ENCODE measurements at regions of chr11 and their contacts with region 1.

Region 1: DNA sequence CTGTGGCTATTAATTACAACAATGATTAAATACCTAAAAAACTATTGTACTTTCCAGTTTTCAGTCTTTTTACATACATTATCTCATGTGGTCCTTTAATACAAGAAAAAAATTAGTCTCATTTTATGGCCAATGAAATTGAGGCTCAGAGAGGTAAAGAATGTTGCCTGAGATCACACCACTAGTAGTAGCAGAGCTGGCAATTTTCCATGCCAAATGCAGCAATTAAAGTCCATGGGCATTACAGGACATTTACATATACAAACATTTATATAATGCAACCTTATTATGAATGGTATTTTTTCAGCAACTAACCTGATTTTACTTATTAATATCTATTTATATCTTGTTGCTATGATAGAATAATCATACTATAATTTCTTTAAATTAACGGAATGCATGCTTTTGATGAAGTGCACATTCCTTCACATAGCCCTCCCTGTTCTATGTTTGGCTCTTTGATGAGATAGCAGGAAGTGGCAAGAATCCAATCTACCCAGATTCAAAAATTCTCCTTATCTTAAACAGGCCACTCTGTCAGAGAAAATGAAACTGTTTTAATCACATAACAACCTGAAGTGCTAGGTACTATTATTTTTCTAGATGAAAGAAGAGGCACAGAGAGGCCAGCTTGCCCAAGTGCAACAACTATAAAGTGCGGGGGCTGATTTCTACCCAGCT is 120.9 kb upstream of the LDLRAD3 start:
- DNase-seq: no peak
- ATAC-seq: no peak
- H3K4me3 ChIP-seq: no peak overlapping the region
- H3K27ac ChIP-seq: no peak overlapping the region
- H3K4me1 ChIP-seq: peaks cover 0 to 31% (median 14%) of the 10 kb centered on the region in 12 donors
- H3K27me3 ChIP-seq: no peaks in the 10 kb centered on the region
- CTCF ChIP-seq: no peak
- POLR2A ChIP-seq: no peak

Region 2: DNA sequence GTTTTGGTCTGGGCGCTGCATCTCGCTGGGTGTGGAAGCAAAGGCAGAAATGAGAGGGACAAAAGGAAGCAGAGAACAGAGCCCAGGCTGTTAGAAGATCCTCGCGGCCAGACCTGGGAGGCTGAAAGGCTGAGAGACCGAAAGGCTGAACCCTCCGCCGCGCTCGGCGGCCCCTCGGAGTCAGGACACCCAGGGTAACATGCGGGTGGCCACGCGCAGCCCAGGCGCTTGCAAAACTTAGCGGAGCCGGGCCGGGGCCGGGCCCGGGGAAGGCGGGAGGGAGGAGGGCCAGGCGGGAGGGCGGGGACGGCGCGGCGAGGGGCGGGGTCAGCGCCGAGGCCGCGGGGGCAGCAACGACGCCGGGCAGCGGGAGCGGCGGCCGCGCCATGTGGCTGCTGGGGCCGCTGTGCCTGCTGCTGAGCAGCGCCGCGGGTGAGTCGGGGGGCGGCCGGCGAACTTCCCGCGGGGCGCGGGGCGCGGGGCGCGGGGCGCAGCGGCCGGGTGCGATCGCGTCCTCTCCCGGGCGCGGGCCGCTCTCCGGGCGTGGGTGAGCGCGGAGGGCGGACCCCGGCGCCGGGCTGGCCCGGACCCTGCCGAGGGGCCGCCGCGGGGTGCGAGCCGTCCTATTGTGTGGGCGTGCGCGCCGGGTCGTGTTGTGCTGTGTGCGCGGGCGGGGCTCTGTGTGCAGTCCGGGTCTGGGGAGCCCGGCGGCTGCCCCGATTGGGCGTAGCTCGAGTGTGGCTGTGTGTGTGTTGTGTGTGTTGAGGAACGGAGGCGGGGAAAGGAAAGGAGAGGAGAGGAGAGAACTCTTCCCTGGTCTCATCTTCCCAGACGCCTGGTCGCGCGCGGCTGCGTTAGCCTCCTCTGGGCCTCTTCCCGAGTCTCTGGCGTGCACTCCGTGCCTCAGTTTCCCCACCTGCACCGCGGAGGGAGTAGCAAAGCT is 121.0 kb after region 1 on chr11 and contains the start of gene LDLRAD3:
- intact Hi-C with region 1: loop called in 1 of 10 experiments (anchors 5 kb)
- DNase-seq: peak; percentile 76 to 91 (median 82)
- ATAC-seq: peak; percentile 67 to 94 (median 92)
- H3K4me3 ChIP-seq: peak within 1 kb of the TSS; percentile 9 to 77 (median 62)
- H3K27ac ChIP-seq: peak within 1 kb of the TSS in 10 of 12 donors; percentile 25 to 68 (median 60)
- H3K4me1 ChIP-seq: peaks cover 0 to 29% (median 9%) of the 10 kb centered on the region in 12 donors
- H3K27me3 ChIP-seq: peaks cover 0 to 6% (median 0%) of the 10 kb centered on the region in 9 donors
- CTCF ChIP-seq: no peak
- POLR2A ChIP-seq: no peak
- total RNA-seq, gene LDLRAD3: 1.5 to 7.7 (median 2.6) TPM

Region 3: GRCh38 chr11:36041988-36042611 is 219.1 kb after region 1 on chr11:
- intact Hi-C with region 1: loop called in 3 of 10 experiments (anchors 10 kb)
- DNase-seq: no peak
- ATAC-seq: peak in 1 of 4 donors; percentile 48
- H3K4me3 ChIP-seq: no peak overlapping the region
- H3K27ac ChIP-seq: no peak overlapping the region
- H3K4me1 ChIP-seq: peaks cover 0 to 4% (median 0%) of the 10 kb centered on the region in 12 donors
- H3K27me3 ChIP-seq: no peaks in the 10 kb centered on the region
- CTCF ChIP-seq: peak in 10 of 12 donors; percentile 21 to 60 (median 42)
- POLR2A ChIP-seq: no peak

Region 4: GRCh38 chr11:36265793-36266628 is 443.1 kb after region 1 on chr11:
- intact Hi-C with region 1: loop called in 8 of 10 experiments (anchors 5 to 10 kb)
- DNase-seq: peak; percentile 16 to 72 (median 44)
- ATAC-seq: peak; percentile 34 to 76 (median 72)
- H3K4me3 ChIP-seq: no peak overlapping the region
- H3K27ac ChIP-seq: no peak overlapping the region
- H3K4me1 ChIP-seq: peaks cover 0 to 3% (median 0%) of the 10 kb centered on the region in 12 donors
- H3K27me3 ChIP-seq: peaks cover 0 to 7% (median 0%) of the 10 kb centered on the region in 9 donors
- CTCF ChIP-seq: peak; percentile 63 to 84 (median 74)
- POLR2A ChIP-seq: no peak

Measured in heart left ventricle (tissue), 16 donors.